ENCODE measurements at regions of chr5 and their contacts with region 1.

Region 1: DNA sequence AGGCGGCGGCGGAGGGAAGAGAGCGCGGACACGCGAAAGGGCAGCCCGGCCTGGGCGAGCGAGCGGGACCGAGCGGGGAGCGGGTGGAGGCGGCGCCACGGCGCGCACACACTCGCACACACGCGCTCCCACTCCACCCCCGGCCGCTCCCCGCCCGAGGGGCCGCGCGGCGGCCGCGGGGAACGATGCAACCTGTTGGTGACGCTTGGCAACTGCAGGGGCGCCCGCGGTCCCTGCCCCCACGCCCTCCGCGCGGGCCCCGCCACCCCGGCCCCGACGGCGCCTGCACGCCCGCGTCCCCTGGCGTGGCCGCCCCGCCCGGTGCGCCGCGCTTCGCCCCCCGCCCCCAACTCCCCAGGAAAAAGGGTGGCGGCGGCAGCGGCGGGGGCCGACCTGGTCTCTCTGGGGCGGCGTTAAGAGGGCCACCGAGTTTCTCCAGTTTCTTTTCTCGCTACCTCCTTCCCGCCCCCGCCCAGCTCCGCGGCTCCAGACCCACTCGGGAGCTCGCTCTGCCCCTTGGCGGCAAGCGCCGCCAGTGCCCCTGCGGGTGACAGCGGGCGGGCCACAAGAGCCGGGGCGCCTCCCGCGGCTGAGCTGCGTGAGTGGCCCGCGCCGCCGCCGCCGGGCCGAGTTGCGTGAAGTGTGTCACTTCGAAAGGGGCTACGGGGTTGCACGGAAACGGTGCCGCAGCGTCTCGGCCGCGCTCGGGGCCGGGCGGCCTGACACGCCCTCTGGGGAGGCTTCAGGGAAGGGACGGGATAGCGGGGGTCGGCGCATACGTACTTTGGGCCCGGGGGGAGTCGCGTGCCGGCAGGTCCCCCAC is at the start of gene NR3C1:
- DNase-seq: peak; percentile 93 to 96
- ATAC-seq: peak; percentile 90
- H3K4me3 ChIP-seq: peak within 1 kb of the TSS; percentile 23 to 77
- H3K27ac ChIP-seq: peak within 1 kb of the TSS; percentile 91 to 93
- H3K4me1 ChIP-seq: peaks cover 10 to 11% of the 10 kb centered on the region in 2 donors
- H3K27me3 ChIP-seq: no peaks in the 10 kb centered on the region
- total RNA-seq, gene NR3C1: 61.2 to 105 TPM

Region 2: GRCh38 chr5:142922223-142922952 is 481.4 kb before region 1 on chr5:
- intact Hi-C with region 1: loop called in 1 of 2 experiments (anchors 2 kb)
- DNase-seq: no peak
- ATAC-seq: peak; percentile 75
- H3K4me3 ChIP-seq: no peak overlapping the region
- H3K27ac ChIP-seq: no peak overlapping the region
- H3K4me1 ChIP-seq: peaks cover 0 to 2% of the 10 kb centered on the region in 2 donors
- H3K27me3 ChIP-seq: no peaks in the 10 kb centered on the region

Region 3: GRCh38 chr5:143106174-143106573 is 297.6 kb before region 1 on chr5:
- intact Hi-C with region 1: loop called in 1 of 2 experiments (anchors 10 kb)
- DNase-seq: no peak
- ATAC-seq: peak; percentile 62
- H3K4me3 ChIP-seq: no peak overlapping the region
- H3K27ac ChIP-seq: no peak overlapping the region
- H3K4me1 ChIP-seq: peaks cover 0 to 7% of the 10 kb centered on the region in 2 donors
- H3K27me3 ChIP-seq: no peaks in the 10 kb centered on the region

Region 4: GRCh38 chr5:143153332-143154119 is 250.3 kb before region 1 on chr5:
- intact Hi-C with region 1: loop called in 1 of 2 experiments (anchors 5 kb)
- DNase-seq: peak; percentile 85 to 87
- ATAC-seq: peak; percentile 91
- H3K4me3 ChIP-seq: peak overlapping the region in 1 of 2 donors; percentile 42
- H3K27ac ChIP-seq: peak overlapping the region; percentile 80 to 98
- H3K4me1 ChIP-seq: peaks cover 18 to 24% of the 10 kb centered on the region in 2 donors
- H3K27me3 ChIP-seq: no peaks in the 10 kb centered on the region

Region 5: DNA sequence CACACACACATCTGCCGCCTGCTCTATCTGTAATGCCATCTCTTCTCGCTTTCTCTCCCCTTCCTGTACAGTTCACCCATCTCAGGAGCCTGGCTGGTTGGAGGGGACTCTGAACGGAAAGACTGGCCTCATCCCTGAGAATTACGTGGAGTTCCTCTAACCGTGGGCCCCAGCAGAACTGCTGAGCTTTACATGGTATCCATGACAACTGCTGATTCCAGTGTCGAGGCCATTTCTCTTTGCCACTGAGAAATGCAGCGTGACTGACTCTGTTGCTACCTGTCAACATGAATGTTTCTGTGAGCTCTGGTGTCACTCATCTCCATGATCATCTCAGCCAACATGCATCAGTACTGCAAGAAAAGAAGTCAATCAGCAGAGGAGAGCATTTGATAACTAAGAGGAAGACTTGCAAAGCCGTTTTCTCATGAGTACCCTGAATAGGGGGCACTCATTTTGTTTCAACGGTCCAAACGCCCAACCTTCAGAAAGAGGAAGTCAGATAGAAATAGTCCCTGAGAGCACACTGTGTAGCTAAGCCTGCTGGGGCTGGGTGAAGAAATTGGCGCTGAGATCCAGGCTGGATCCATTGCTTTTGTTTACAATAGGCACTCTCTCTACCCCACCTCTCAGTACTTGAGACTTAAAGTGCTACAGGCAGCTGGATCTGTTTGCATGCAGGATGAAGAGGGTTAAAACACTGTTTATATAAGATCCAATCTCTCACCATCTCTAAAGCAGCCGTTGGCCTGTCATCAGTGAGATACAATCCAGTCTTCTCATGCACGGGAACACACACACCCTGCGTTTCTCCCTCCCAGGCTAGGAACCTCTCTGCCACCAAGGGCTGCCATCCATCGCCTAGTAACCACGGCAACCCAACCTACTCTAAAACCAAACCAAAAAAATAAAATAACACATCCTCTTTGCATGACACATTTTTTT is 181.2 kb before region 1 on chr5:
- intact Hi-C with region 1: no loop called
- DNase-seq: peak in 1 of 2 donors; percentile 59
- ATAC-seq: peak; percentile 44
- H3K4me3 ChIP-seq: no peak overlapping the region
- H3K27ac ChIP-seq: no peak overlapping the region
- H3K4me1 ChIP-seq: no peaks in the 10 kb centered on the region
- H3K27me3 ChIP-seq: no peaks in the 10 kb centered on the region

Region 6: DNA sequence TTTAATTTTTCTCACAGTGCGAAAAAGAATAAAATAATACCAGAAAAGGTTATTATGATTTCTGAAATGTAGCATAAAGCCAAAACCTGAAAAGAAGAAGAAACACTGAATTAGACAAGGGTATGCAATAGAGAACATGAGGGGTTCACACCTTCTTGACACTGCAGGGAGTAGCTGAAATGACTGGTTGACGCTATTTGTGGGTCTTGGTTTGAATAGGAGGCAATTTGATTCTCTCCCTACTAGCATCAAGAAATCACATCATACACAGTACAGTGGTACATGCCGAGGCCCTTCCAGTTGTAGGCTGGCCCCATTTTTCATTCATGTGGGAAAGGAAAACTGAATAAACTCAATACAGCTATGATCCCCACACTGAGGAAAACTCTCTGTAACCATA is 68.9 kb before region 1 on chr5:
- intact Hi-C with region 1: loop called in 1 of 2 experiments (anchors 5 kb)
- DNase-seq: no peak
- ATAC-seq: no peak
- H3K4me3 ChIP-seq: no peak overlapping the region
- H3K27ac ChIP-seq: peak overlapping the region in 1 of 2 donors; percentile 33
- H3K4me1 ChIP-seq: peaks cover 0 to 7% of the 10 kb centered on the region in 2 donors
- H3K27me3 ChIP-seq: no peaks in the 10 kb centered on the region

Region 7: DNA sequence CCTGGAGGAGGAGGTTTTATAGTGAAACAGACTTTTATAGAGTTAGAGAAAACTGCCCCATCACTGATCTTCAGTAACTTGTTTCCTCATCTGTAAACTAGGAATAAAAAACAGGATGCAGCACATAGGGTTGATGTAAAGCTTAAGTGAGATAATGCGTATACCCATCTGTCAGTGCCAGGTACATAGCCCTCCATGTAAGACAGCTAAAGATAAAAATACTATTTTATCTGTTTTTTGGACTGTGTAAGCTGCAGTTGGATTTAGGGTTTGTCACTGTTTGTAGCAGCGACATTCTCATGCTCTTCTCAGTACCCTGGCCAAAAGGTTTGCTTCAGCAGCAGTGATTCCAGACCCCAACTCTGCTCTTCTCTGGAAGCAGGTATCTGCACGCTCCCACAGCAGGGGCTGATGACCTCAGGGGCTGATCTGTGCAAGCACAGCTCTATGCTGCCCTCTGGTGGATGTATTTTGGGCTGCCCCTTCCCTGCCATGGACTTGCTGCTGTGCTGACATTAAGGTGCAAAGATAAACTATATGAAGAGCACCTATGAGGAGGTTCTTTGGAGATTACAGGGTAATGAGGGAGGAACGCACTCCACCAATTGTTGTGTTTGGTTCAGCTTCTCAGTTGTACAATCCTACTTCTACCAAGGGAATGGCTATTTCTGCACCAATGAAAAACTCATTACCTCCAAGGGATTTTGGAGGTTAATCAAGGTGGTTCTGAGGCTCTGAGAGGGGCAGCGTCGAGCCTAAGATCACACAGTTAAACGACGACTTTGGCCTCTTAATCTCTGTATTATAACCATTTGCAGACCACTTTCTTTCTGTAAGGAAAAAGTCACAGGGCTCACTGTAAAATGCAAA is 421.3 kb after region 1 on chr5:
- intact Hi-C with region 1: loop called (anchors 5 kb)
- DNase-seq: peak; percentile 84 to 89
- ATAC-seq: peak; percentile 91
- H3K4me3 ChIP-seq: no peak overlapping the region
- H3K27ac ChIP-seq: no peak overlapping the region
- H3K4me1 ChIP-seq: no peaks in the 10 kb centered on the region
- H3K27me3 ChIP-seq: no peaks in the 10 kb centered on the region

Measured in aorta (tissue), 5 donors.